ENCODE measurements at regions of chr1 and their contacts with region 1.

Region 1: GRCh38 chr1:70685300-70686241 is 274.5 kb downstream of the CTH start:
- DNase-seq: peak; percentile 31 to 71
- H3K4me3 ChIP-seq: no peak overlapping the region
- H3K27ac ChIP-seq: no peak overlapping the region
- H3K4me1 ChIP-seq: peaks cover 0 to 3% (median under 1%) of the 10 kb centered on the region in 4 experiments; a peak in 3 of 7 replicates
- H3K27me3 ChIP-seq: no peaks in the 10 kb centered on the region
- CTCF ChIP-seq: peak; percentile 71 to 96 (median 87)
- EP300 ChIP-seq: no peak
- POLR2A ChIP-seq: no peak
- RAD21 ChIP-seq: peak; percentile 83 to 89

Region 2: DNA sequence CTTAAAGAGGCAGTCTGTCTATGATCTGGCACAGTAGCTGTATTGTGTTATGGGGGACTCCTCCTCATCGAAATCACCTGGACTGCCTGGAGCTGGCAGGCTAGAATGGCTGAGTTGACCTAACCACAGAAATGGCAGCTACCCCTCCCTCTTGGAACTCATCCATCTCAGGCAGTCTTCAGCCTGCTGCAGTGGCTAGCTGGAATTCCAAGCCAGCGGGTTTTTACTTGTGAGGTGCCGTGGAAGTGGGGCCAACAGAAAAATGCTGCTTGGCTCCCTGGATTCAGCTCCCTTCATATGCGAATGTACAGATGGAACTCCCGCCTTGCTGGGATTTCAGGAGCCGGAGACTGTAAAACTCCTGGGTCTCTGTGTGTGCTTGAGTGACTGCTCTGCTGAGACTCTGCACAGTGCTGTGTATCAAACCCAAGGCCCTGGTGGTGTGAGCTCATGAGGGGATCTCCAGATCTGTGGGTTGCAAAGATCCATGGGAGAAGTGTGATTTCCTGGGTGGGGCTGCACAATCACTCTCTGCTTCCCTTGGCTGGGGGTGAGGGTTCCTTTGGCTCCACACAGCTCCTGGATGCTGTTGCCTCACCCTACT is 42.4 kb after region 1 on chr1:
- CTCF ChIA-PET with region 1: interaction called, 13 read pairs
- POLR2A ChIA-PET with region 1: no interaction called
- DNase-seq: peak in 1 of 2 experiments; percentile 48
- H3K4me3 ChIP-seq: no peak overlapping the region
- H3K27ac ChIP-seq: no peak overlapping the region
- H3K4me1 ChIP-seq: peaks cover 0 to 7% (median under 1%) of the 10 kb centered on the region in 4 experiments; a peak in 1 of 7 replicates
- H3K27me3 ChIP-seq: no peaks in the 10 kb centered on the region
- CTCF ChIP-seq: no peak
- EP300 ChIP-seq: no peak
- POLR2A ChIP-seq: no peak
- RAD21 ChIP-seq: no peak; a peak in 1 of 4 replicates